ENCODE measurements at regions of chr19 and their contacts with region 1.

Region 1: DNA sequence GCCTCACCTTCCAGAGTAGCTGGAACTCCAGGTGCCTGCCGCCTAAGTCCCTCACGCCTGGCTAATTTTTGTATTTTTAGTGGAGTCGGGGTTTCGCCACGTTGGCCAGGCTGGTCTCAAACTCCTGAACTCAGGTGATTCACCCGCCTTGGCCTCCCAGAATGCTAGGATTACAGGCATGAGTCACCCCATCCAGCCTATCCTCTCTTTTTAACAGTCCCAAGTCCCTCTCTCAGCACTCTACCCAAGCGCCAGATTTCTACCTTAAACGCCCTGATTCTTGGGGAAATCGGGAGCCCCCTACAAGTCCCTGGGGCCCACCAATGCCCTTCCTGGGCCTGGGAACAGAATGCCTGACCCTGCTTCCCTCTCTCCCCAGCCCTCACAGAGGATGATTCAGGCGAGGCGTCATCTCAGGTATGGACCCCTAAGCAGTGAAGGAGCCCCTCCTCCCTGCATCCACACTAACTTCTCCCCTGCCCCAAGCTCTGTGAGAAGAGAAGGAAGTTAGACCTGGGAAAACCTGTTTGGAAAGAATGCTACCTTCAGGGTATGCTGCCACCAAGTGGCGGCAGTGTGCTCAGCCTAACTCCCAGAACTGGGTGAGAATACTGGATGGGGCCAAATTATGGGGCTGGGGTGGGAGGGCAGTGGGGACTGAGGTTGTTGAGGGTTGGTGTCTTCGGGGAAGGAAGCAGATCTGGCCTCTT is 20.8 kb upstream of the EBI3 start:
- DNase-seq: no peak
- ATAC-seq: peak; percentile 68
- H3K4me3 ChIP-seq: no peak overlapping the region
- H3K27ac ChIP-seq: no peak overlapping the region
- H3K4me1 ChIP-seq: no peaks in the 10 kb centered on the region
- H3K27me3 ChIP-seq: no peaks in the 10 kb centered on the region
- CTCF ChIP-seq: peak; percentile 61 to 78 (median 62)
- EP300 ChIP-seq: no peak
- POLR2A ChIP-seq: no peak
- RAD21 ChIP-seq: peak; percentile 14; the same call in 1 of the 2 replicates

Region 2: DNA sequence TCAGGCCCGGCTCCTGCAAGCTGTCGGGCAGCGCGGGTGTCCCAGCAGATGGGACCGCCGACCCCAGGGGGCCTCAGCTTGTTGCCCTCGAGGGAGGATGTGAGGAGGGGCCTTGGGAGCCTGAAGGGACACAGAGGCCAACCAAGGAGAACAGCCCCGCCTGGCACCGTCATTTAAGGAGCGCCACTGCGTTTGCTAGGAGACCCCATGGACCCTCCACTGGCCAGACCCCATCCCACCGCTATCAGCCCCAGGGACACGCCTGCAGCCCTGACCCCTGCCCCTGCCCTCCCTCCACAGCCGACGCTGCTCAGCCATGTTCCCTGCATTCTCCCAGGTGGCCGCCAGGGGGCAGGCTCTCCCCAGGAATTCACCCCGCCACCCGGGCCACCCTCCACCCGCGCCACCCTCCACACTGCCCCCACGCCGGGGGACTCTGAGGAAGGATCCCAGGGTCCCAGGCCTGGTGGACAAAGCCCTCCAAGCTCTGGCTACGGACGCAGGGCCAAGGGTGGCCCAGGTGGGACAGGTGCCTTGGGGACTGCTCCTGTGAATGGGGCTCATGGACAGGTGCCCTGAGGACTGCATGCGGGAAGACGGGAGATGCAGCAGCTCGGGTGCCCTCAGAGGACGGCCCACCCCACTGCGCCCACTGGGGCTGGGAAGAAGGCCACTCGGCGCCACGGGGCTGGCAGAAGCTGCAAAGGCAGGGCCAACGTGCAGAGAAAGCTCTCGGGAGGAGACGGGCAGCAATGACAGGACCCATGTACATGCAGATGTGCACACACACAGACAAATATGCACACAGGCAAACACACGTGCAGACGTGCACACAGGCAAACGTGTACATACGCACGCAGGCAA is 542.6 kb before region 1 on chr19:
- CTCF ChIA-PET with region 1: no interaction called
- POLR2A ChIA-PET with region 1: no interaction called
- RAD21 ChIA-PET with region 1: no interaction called
- SMC1A ChIA-PET with region 1: no interaction called
- in situ Hi-C with region 1: loop called (anchors 10 kb)
- intact Hi-C with region 1: no loop called
- DNase-seq: no peak
- ATAC-seq: peak; percentile 96
- H3K4me3 ChIP-seq: no peak overlapping the region
- H3K27ac ChIP-seq: no peak overlapping the region; the same call in 1 of the 2 replicates
- H3K4me1 ChIP-seq: peaks cover 11% of the 10 kb centered on the region
- H3K27me3 ChIP-seq: no peaks in the 10 kb centered on the region
- CTCF ChIP-seq: peak; percentile 82 to 97 (median 94)
- EP300 ChIP-seq: no peak
- POLR2A ChIP-seq: no peak
- RAD21 ChIP-seq: peak; percentile 84

Region 3: DNA sequence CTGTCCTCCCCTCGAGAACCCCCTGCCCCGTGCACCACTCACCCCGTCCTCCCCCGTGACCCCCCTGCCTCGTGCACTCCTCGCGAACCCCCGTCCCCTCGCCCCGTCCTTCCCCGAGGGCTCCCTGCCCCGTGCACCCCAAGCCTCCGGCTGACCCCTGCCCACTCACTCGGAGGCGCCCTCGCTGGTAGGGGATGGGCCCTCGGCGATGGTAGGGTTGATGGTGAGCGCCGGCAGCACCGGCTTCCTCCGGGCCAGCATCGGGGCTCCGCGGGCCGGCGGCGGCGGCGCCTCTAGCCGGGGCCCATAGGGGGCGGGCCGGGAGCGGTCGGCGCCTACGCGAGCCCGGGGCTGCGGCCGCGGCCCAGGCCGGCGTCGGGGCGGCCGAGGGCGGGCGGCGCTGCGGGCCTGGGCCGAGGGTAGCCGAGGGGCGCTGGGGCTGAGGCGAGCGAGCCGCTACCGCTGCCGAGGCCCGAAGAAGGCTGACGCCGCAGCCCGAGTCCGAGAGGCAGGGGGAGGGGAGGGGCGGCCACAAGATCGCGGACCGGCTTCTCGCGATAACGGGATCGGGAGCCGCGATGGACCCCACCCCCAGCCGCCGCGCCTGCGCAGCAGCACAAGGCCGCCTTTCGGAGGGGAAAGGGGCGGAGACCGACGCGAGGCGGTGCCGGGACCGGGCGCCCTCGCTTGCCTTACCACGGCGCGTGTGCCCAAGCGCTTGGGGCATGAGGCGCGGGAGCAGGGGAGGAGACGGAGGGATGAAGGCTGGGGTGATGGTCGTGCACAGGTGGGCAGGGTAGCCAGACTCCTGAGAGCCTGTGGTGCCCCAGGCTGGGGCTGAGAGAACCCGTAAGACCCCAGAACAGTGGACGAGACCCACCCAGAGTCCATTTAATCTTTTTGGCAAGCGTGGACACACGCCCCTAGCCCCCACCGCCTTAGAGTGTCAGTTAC is 84.6 kb before region 1 on chr19 and contains the start of gene MAP2K2:
- CTCF ChIA-PET with region 1: no interaction called
- POLR2A ChIA-PET with region 1: no interaction called
- RAD21 ChIA-PET with region 1: no interaction called
- SMC1A ChIA-PET with region 1: no interaction called
- in situ Hi-C with region 1: no loop called
- intact Hi-C with region 1: no loop called
- DNase-seq: peak; percentile 60
- ATAC-seq: peak; percentile 97
- H3K4me3 ChIP-seq: peak within 1 kb of the TSS; percentile 99
- H3K27ac ChIP-seq: peak within 1 kb of the TSS; percentile 78
- H3K4me1 ChIP-seq: no peaks in the 10 kb centered on the region; the same call in 1 of the 2 replicates
- H3K27me3 ChIP-seq: no peaks in the 10 kb centered on the region
- CTCF ChIP-seq: no peak
- EP300 ChIP-seq: no peak
- POLR2A ChIP-seq: peak; percentile 87
- RAD21 ChIP-seq: no peak
- polyA plus RNA-seq, gene MAP2K2: 1.00 to 6.8 TPM

Region 4: DNA sequence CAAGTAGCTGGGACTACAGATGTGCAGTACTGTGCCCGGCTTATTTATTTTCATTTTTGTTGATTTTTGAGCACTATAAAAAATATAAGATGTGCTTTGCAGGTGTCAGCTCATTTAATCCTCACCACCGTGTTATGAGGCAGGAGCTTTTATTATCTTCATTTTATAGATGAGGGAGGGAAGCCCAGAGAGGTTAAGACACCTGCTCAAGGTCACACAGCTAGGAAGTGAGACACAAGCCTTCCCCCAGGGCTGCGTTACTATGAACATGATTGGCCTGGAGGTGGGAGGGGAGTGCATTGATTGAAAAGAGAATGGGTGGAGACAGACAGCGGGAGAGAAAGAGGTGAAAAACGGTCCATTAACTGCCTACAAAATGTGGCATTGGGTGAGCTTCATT is 18.9 kb before region 1 on chr19:
- CTCF ChIA-PET with region 1: interaction called, 17 read pairs
- POLR2A ChIA-PET with region 1: no interaction called
- RAD21 ChIA-PET with region 1: no interaction called
- SMC1A ChIA-PET with region 1: no interaction called
- in situ Hi-C with region 1: no loop called
- intact Hi-C with region 1: no loop called
- DNase-seq: no peak
- ATAC-seq: no peak
- H3K4me3 ChIP-seq: no peak overlapping the region
- H3K27ac ChIP-seq: no peak overlapping the region
- H3K4me1 ChIP-seq: no peaks in the 10 kb centered on the region
- H3K27me3 ChIP-seq: no peaks in the 10 kb centered on the region
- CTCF ChIP-seq: no peak
- EP300 ChIP-seq: no peak
- POLR2A ChIP-seq: no peak
- RAD21 ChIP-seq: no peak

Region 5: DNA sequence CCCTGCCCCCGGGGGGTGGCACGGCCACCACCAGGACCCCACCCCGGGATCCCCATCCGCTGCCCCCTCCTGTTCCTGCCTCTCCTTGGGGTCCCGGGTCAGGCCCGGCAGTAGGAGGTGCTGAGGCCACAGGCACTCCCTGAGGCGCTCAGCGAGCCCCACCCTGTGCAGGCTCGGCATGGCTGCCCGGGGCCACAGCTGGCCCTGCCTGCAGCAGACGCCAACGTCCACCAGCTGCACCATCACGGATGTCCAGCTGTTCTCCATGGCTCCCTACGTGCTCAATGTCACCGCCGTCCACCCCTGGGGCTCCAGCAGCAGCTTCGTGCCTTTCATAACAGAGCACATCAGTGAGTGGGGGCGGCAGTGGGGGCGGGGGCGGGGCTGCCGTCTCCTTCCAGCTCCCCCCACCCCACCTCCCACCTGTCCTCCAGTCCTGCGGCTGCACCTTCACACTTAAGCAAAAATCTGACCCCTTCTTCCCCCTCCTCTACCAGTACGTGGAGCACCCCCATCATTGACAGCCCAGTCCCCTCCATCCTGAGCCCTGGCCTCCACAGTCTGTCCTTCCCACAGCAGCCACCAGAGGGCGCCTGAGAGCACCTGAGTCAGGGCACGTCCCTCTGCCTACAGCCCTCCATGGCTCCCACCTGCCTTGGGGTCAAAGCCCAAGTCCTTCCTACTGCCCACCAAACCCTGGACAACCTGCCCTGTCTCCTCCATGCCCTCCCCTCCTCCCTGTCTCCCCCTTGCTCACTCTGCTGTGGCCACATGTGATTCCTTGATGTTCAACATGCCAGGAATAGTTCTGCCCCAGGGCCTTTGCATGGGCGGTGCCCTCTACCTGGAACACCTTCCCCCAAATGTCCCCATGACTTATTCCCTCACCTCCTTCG is 24.7 kb after region 1 on chr19:
- CTCF ChIA-PET with region 1: interaction called, 19 read pairs
- POLR2A ChIA-PET with region 1: interaction called, 6 read pairs
- RAD21 ChIA-PET with region 1: interaction called, 10 read pairs
- SMC1A ChIA-PET with region 1: no interaction called
- in situ Hi-C with region 1: no loop called
- intact Hi-C with region 1: no loop called
- DNase-seq: no peak
- ATAC-seq: peak; percentile 50
- H3K4me3 ChIP-seq: peak overlapping the region; percentile 48; the same call in 1 of the 2 replicates
- H3K27ac ChIP-seq: no peak overlapping the region
- H3K4me1 ChIP-seq: peaks cover 3% of the 10 kb centered on the region
- H3K27me3 ChIP-seq: no peaks in the 10 kb centered on the region
- CTCF ChIP-seq: peak; percentile 77 to 98 (median 92)
- EP300 ChIP-seq: no peak
- POLR2A ChIP-seq: no peak
- RAD21 ChIP-seq: peak; percentile 41

Region 6: GRCh38 chr19:4256563-4256962 is 48.0 kb after region 1 on chr19:
- CTCF ChIA-PET with region 1: no interaction called
- POLR2A ChIA-PET with region 1: no interaction called
- RAD21 ChIA-PET with region 1: no interaction called
- SMC1A ChIA-PET with region 1: no interaction called
- in situ Hi-C with region 1: no loop called
- intact Hi-C with region 1: no loop called
- DNase-seq: no peak
- ATAC-seq: no peak
- H3K4me3 ChIP-seq: no peak overlapping the region
- H3K27ac ChIP-seq: no peak overlapping the region
- H3K4me1 ChIP-seq: no peaks in the 10 kb centered on the region
- H3K27me3 ChIP-seq: no peaks in the 10 kb centered on the region
- CTCF ChIP-seq: 0 out of 6 replicates have a peak, but pooled peaks of 1 of the 3 experiments have one; percentile 20
- EP300 ChIP-seq: no peak
- POLR2A ChIP-seq: no peak
- RAD21 ChIP-seq: no peak